ENCODE measurements at regions of chr3 and their contacts with region 1.

Region 1: GRCh38 chr3:57597122-57597923 is at the start of gene ARF4:
- DNase-seq: peak; percentile 99
- H3K4me3 ChIP-seq: peak within 1 kb of the TSS; percentile 100
- H3K27ac ChIP-seq: peak within 1 kb of the TSS; percentile 100
- H3K27me3 ChIP-seq: no peaks in the 10 kb centered on the region
- CTCF ChIP-seq: peak; percentile 23
- polyA plus RNA-seq, gene ARF4: 588 and 766 TPM in 2 replicates

Region 2: DNA sequence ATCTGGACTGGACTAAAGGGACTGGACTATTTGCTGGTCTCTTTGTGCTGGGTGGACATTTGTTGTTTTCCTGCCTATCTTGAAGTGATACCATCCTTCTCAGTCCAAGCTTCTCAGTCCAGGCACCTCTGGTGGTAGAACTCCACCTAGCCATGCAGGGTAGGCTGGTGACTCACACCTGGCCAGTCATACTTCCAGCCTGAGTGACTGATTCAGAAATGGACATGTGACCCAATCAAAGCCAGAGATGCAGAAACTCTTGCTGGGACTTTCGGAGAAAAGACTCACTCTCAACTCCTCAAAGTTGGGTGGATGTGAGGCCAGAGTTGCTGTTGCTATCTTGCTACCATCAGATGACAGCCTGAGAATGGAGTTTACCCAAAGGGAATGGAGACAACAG is 299.3 kb before region 1 on chr3:
- CTCF ChIA-PET with region 1: no interaction called
- POLR2A ChIA-PET with region 1: no interaction called
- DNase-seq: no peak
- H3K4me3 ChIP-seq: no peak overlapping the region
- H3K27ac ChIP-seq: no peak overlapping the region
- H3K27me3 ChIP-seq: no peaks in the 10 kb centered on the region
- CTCF ChIP-seq: no peak

Region 3: DNA sequence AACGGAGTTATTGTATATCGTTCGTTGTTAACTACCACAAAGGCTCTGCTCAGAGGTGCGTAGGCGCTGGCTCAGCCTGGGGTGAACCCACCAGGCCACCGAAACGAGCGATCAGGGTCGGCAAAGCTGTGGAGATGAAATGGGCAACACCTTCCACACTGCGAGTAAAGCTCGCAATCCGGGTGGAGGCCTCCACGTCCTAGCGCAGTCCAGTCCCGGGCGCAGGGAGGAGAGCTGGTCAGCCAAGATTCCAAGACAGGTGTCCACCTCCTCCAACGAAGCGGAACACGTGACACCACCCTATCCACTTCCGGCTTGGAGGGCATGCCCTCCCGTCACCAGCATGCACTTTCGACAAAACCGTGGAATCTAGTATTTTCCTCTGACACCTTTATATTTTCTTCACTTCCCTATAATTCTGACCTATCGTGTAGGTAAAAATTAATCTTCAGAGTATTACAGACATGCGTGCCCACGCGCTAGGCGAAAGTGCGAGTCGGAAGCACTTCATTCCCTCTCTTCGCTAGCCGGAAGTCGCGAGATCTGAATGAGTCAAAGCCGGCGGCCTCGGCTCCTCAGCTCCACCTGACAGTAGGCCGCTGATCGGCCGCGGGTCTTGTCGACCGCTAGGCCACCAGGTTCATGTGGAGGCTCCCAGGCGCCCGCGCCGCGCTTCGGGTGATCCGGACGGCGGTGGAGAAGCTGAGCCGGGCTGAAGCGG is 41.4 kb before region 1 on chr3 and contains the start of gene PDE12:
- CTCF ChIA-PET with region 1: no interaction called
- POLR2A ChIA-PET with region 1: interaction called, 10 read pairs
- DNase-seq: peak; percentile 64
- H3K4me3 ChIP-seq: peak within 1 kb of the TSS; percentile 93
- H3K27ac ChIP-seq: peak within 1 kb of the TSS; percentile 90
- H3K27me3 ChIP-seq: no peaks in the 10 kb centered on the region
- CTCF ChIP-seq: no peak; the same call in 1 of the 2 replicates
- polyA plus RNA-seq, gene PDE12: 11.5 and 12.1 TPM in 2 replicates

Region 4: GRCh38 chr3:57755668-57756527 is 158.6 kb after region 1 on chr3 and contains the start of gene SLMAP:
- CTCF ChIA-PET with region 1: interaction called, 4 read pairs
- POLR2A ChIA-PET with region 1: interaction called, 14 read pairs
- DNase-seq: peak; percentile 89
- H3K4me3 ChIP-seq: peak within 1 kb of the TSS; percentile 80
- H3K27ac ChIP-seq: peak within 1 kb of the TSS; percentile 73
- H3K27me3 ChIP-seq: no peaks in the 10 kb centered on the region
- CTCF ChIP-seq: no peak
- polyA plus RNA-seq, gene SLMAP: 29.7 and 40.2 TPM in 2 replicates

Region 5: DNA sequence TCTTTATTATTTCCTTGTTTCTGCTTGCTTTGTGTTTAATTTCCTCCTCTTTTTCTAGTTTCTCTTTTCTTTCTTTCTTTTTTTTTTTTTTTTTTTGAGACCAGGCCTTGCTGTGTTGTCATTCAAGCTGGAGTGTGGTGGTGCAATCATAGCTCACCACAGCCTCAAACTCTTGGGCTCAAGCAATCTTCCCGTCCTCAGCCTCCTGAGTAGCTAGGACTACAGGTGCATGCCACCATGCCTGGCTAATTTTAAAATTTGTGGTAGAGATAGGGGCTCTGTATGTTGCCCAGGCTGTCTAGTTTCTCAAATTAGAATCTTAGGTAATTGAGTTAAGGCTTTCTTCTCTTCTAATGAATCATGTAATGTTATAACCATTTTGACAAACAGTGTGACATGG is 181.2 kb after region 1 on chr3:
- CTCF ChIA-PET with region 1: no interaction called
- POLR2A ChIA-PET with region 1: no interaction called
- DNase-seq: no peak
- H3K4me3 ChIP-seq: no peak overlapping the region
- H3K27ac ChIP-seq: no peak overlapping the region
- H3K27me3 ChIP-seq: no peaks in the 10 kb centered on the region
- CTCF ChIP-seq: no peak